ENCODE measurements at regions of chr12 and their contacts with region 1.

Region 1: DNA sequence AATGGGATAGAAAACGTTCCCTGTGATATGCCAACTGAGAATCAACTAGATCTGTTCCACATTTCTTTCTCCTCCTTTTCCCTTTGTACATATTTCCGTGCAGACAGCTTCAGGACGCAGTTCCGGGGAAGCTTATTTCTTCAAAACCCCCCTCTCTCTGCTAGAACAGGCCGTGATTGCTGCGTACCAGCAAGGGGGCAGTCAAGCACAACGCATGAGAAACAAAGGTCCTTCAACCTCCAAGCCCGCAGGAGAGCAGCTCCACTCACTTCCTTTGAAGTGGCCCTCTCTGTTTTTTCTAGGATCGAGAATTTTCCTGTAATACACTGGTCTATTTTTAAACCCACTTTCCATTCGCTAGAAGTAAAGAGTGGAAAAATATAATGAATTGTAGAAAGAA is 80.8 kb downstream of the ZNF664 start:
- DNase-seq: peak; percentile 62 to 75
- ATAC-seq: peak; percentile 73
- H3K4me3 ChIP-seq: no peak overlapping the region
- H3K27ac ChIP-seq: no peak overlapping the region
- H3K4me1 ChIP-seq: no peaks in the 10 kb centered on the region
- H3K27me3 ChIP-seq: no peaks in the 10 kb centered on the region

Region 2: GRCh38 chr12:124321040-124321481 is 267.2 kb after region 1 on chr12:
- intact Hi-C with region 1: loop called (anchors 5 kb)
- DNase-seq: peak; percentile 80 to 93
- ATAC-seq: peak; percentile 90
- H3K4me3 ChIP-seq: no peak overlapping the region
- H3K27ac ChIP-seq: no peak overlapping the region
- H3K4me1 ChIP-seq: no peaks in the 10 kb centered on the region
- H3K27me3 ChIP-seq: no peaks in the 10 kb centered on the region

Measured in aorta (tissue), 5 donors.